Dendritic cell treated with granulocyte-macrophage colony-stimulating factor and Interleukin-4, amounts not matched to agents 40 ng/mL and 50 ng/mL, for 4 days (primary cell): ENCODE measurements at regions of chr11 and their contacts with region 1.

Region 1: GRCh38 chr11:86081455-86081854 is 12.6 kb upstream of the PICALM start:
- H3K4me3 Mint-ChIP-seq: no peak overlapping the region
- H3K27ac Mint-ChIP-seq: no peak overlapping the region
- H3K4me1 Mint-ChIP-seq: peaks cover 10% of the 10 kb centered on the region
- H3K27me3 Mint-ChIP-seq: no peaks in the 10 kb centered on the region

Region 2: GRCh38 chr11:85854557-85855340 is 226.7 kb before region 1 on chr11:
- intact Hi-C with region 1: no loop called
- H3K4me3 Mint-ChIP-seq: peak overlapping the region; percentile 87
- H3K27ac Mint-ChIP-seq: peak overlapping the region; percentile 97
- H3K4me1 Mint-ChIP-seq: peaks cover 16% of the 10 kb centered on the region
- H3K27me3 Mint-ChIP-seq: no peaks in the 10 kb centered on the region

Region 3: GRCh38 chr11:86041975-86042378 is 39.5 kb before region 1 on chr11:
- intact Hi-C with region 1: no loop called
- H3K4me3 Mint-ChIP-seq: peak overlapping the region; percentile 49
- H3K27ac Mint-ChIP-seq: peak overlapping the region; percentile 61
- H3K4me1 Mint-ChIP-seq: peaks cover 76% of the 10 kb centered on the region
- H3K27me3 Mint-ChIP-seq: no peaks in the 10 kb centered on the region

Region 4: GRCh38 chr11:86124834-86125233 is 43.4 kb after region 1 on chr11:
- intact Hi-C with region 1: loop called (anchors 5 kb)
- H3K4me3 Mint-ChIP-seq: no peak overlapping the region
- H3K27ac Mint-ChIP-seq: no peak overlapping the region
- H3K4me1 Mint-ChIP-seq: peaks cover 41% of the 10 kb centered on the region
- H3K27me3 Mint-ChIP-seq: no peaks in the 10 kb centered on the region

Region 5: DNA sequence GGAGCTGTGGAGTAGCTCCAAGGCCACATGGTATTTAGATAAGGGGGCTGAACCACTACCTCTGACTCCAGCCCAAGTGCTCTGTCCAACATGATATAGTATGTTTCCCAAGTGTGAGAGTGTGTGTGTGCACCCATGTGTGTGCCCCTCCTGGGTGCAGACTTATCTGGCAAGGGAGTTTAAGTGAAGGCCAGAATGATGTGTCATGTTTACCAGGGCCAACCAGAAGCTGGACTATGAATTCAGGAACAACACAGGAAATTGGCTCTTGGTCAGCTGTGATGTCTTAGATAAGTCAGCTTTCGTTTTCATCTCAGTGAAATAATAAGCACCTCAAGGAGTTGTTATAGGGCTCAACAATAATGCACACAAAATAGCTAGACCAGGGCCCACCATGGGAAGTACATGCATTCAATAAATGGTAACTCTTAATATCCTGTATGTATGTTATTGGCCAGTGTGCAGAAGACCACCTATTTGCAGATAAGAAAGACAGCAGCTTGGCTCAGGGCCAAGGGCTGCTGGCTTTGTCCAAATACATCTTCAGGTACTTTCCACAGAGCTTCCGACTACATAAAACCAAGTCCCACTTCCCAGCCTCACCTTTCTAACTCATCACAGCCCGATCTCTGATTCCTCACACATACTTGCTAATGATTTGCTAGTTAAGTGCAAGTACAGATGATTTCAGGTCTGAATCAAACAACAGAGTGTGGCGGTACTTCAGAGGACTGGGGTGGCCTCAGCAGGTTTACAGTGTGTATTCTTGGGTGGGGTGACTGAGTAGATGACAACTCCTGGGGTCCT is 470.0 kb after region 1 on chr11:
- intact Hi-C with region 1: no loop called
- H3K4me3 Mint-ChIP-seq: no peak overlapping the region
- H3K27ac Mint-ChIP-seq: no peak overlapping the region
- H3K4me1 Mint-ChIP-seq: no peaks in the 10 kb centered on the region
- H3K27me3 Mint-ChIP-seq: no peaks in the 10 kb centered on the region